ENCODE measurements at regions of chr1 and their contacts with region 1.

Region 1: GRCh38 chr1:27959400-27960217 is at the start of gene XKR8:
- DNase-seq: peak; percentile 73 to 88 (median 82)
- ATAC-seq: peak; percentile 98
- H3K4me3 Mint-ChIP-seq: peak within 1 kb of the TSS; percentile 79 to 90 (median 87)
- H3K27ac Mint-ChIP-seq: peak within 1 kb of the TSS; percentile 84 to 96 (median 93)
- H3K4me1 Mint-ChIP-seq: peaks cover 12 to 39% (median 21%) of the 10 kb centered on the region in 4 donors
- H3K27me3 Mint-ChIP-seq: peaks cover 0 to 5% (median 0%) of the 10 kb centered on the region in 5 donors
- polyA plus RNA-seq, gene XKR8: 7.2 to 14.4 (median 13.2) TPM

Region 2: GRCh38 chr1:27940297-27940696 is 19.3 kb before region 1 on chr1:
- POLR2A ChIA-PET with region 1: interaction called, 20 read pairs
- DNase-seq: peak; percentile 45 to 89 (median 68)
- ATAC-seq: peak; percentile 90 to 96
- H3K4me3 Mint-ChIP-seq: no peak overlapping the region
- H3K27ac Mint-ChIP-seq: peak overlapping the region; percentile 41 to 94 (median 83)
- H3K4me1 Mint-ChIP-seq: peaks cover 9 to 52% (median 26%) of the 10 kb centered on the region in 4 donors
- H3K27me3 Mint-ChIP-seq: peaks cover 0 to 7% (median 6%) of the 10 kb centered on the region in 5 donors